Activated CD4-positive, alpha-beta T cell treated with anti-CD3 and anti-CD28 coated beads, Interleukin-2, amount 10 ng/mL, durations not matched to agents 24 days and 14 days (primary cell): ENCODE measurements at regions of chr18 and their contacts with region 1.

Region 1: DNA sequence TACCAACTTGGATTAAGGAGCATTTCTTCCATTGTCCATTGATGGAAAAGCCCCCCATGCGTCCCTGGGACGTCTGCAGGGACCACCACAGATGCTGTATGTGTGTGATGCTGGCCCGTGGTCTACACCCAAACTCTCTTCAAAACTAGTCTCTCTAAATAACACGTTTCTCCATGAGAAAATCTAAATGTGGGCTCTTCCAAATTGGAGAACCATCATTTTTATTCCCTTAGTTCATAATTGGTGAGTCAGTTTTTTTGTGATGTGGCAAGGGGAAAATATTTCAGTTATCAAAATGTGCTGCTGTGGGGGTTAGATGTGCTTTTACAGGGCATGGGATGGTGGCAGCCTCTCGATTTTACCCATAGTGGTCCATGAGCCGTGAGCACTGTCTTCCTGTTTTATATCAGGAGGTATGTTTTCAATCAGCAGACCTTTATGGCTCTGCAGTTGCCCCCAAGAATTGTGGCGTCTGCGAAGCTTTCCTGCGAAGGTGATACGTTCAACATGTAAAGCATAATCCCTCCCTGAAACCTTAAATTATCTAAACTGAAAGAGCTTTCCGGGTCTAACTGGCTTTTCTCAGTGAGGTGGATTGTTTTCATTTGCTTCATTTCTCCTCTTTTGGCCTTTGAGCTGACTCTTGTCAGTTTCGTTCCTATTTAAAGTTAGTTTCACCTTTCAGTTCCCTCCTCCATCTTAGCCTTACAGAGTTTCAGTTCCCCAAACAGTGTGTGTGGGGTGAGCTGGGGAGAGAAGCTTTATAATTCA is 78.4 kb downstream of the SETBP1 start:
- DNase-seq: peak; percentile 78
- H3K4me3 Mint-ChIP-seq: peak overlapping the region; percentile 77
- H3K27ac Mint-ChIP-seq: peak overlapping the region; percentile 97
- H3K4me1 Mint-ChIP-seq: peaks cover 32% of the 10 kb centered on the region
- H3K27me3 Mint-ChIP-seq: peaks cover 11% of the 10 kb centered on the region

Region 2: DNA sequence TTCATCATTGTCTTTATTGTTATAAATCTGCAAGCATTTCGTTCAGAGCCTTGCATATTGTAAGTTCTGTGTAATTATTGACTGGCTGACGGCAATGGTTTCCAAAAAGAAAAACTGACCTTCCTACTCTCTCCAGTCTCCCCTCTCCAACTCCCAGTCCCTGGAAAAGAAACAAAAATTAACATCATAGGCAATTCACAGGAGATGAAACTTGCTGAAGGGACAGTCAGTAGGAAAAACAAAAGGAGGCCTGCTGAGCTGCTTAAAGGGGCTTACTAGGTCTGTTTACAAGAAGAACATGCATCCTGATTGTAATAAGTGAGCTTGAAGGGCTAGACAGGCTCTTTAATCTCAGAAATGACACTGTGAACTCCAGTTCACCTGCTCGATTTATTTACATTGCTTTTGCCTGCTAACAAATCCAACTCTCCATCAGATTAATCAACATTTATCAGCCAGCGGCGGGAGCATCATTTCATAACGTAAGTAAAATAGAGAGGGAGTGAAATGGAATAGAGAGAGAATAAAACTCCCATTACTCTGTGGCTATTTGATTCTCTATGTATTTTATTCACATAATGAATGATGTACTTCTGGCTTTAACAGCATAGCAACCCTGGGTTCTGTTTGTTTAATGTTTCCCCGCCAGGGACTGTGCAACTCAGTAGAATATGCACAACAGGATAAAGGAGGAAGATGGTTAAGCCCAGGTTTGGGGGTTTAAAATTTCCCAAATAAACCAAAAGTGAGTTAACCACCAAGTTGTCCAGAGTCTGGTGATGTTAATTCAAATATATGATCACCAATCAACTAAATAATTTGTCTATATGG is 335.0 kb before region 1 on chr18:
- intact Hi-C with region 1: no loop called
- DNase-seq: no peak
- H3K4me3 Mint-ChIP-seq: no peak overlapping the region
- H3K27ac Mint-ChIP-seq: no peak overlapping the region
- H3K4me1 Mint-ChIP-seq: no peaks in the 10 kb centered on the region
- H3K27me3 Mint-ChIP-seq: no peaks in the 10 kb centered on the region

Region 3: GRCh38 chr18:44637210-44638051 is 121.6 kb before region 1 on chr18:
- intact Hi-C with region 1: no loop called
- DNase-seq: peak; percentile 58
- H3K4me3 Mint-ChIP-seq: no peak overlapping the region
- H3K27ac Mint-ChIP-seq: no peak overlapping the region
- H3K4me1 Mint-ChIP-seq: peaks cover 3% of the 10 kb centered on the region
- H3K27me3 Mint-ChIP-seq: peaks cover 10% of the 10 kb centered on the region

Region 4: GRCh38 chr18:44651453-44651852 is 107.6 kb before region 1 on chr18:
- intact Hi-C with region 1: no loop called
- DNase-seq: no peak
- H3K4me3 Mint-ChIP-seq: no peak overlapping the region
- H3K27ac Mint-ChIP-seq: no peak overlapping the region
- H3K4me1 Mint-ChIP-seq: no peaks in the 10 kb centered on the region
- H3K27me3 Mint-ChIP-seq: peaks cover 11% of the 10 kb centered on the region

Region 5: GRCh38 chr18:44725300-44726096 is 33.5 kb before region 1 on chr18:
- intact Hi-C with region 1: loop called (anchors 1 kb)
- DNase-seq: peak; percentile 91
- H3K4me3 Mint-ChIP-seq: peak overlapping the region; percentile 72
- H3K27ac Mint-ChIP-seq: peak overlapping the region; percentile 93
- H3K4me1 Mint-ChIP-seq: peaks cover 80% of the 10 kb centered on the region
- H3K27me3 Mint-ChIP-seq: peaks cover 2% of the 10 kb centered on the region

Region 6: DNA sequence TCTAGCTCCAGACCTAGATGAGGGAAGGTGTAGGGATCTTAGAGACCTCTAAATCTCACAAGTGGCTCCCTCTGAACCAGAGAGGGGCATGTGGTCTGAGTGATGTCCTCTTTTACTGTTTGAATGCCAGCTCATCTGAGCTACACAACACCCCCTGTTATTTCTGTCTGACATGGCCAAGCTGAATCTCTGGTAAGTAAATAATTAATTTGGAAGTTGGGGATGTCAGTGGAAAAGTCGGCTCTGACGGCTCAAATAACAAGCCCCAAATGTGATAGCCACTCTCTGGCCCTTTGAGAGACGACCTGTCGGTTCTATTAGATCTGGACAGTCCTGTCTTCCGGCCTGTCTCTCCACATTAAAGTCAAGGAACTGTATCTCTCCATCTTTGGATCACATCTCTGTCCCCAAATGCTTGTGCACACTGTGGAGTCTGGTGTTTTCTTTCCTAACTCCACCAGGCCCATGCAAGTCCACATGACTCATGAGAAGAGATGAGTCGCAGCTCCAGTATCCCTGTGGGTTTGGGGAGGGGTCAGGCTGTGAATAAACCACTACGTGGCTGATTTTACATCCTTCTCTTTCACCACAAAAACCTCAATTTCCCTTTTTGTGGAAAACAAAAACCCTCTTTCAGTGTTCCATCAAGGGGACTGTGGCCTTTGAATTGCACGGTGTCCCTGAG is 25.8 kb before region 1 on chr18:
- intact Hi-C with region 1: loop called (anchors 2 kb)
- DNase-seq: peak; percentile 73
- H3K4me3 Mint-ChIP-seq: peak overlapping the region; percentile 35
- H3K27ac Mint-ChIP-seq: peak overlapping the region; percentile 80
- H3K4me1 Mint-ChIP-seq: peaks cover 55% of the 10 kb centered on the region
- H3K27me3 Mint-ChIP-seq: peaks cover 20% of the 10 kb centered on the region

Region 7: GRCh38 chr18:44799907-44800421 is 40.9 kb after region 1 on chr18:
- intact Hi-C with region 1: loop called (anchors 1 kb)
- DNase-seq: peak; percentile 56
- H3K4me3 Mint-ChIP-seq: peak overlapping the region; percentile 58
- H3K27ac Mint-ChIP-seq: peak overlapping the region; percentile 18
- H3K4me1 Mint-ChIP-seq: peaks cover 59% of the 10 kb centered on the region
- H3K27me3 Mint-ChIP-seq: no peaks in the 10 kb centered on the region

Region 8: GRCh38 chr18:44819944-44820510 is 61.0 kb after region 1 on chr18:
- intact Hi-C with region 1: loop called (anchors 1 kb)
- DNase-seq: no peak
- H3K4me3 Mint-ChIP-seq: no peak overlapping the region
- H3K27ac Mint-ChIP-seq: no peak overlapping the region
- H3K4me1 Mint-ChIP-seq: peaks cover 18% of the 10 kb centered on the region
- H3K27me3 Mint-ChIP-seq: peaks cover 31% of the 10 kb centered on the region

Region 9: DNA sequence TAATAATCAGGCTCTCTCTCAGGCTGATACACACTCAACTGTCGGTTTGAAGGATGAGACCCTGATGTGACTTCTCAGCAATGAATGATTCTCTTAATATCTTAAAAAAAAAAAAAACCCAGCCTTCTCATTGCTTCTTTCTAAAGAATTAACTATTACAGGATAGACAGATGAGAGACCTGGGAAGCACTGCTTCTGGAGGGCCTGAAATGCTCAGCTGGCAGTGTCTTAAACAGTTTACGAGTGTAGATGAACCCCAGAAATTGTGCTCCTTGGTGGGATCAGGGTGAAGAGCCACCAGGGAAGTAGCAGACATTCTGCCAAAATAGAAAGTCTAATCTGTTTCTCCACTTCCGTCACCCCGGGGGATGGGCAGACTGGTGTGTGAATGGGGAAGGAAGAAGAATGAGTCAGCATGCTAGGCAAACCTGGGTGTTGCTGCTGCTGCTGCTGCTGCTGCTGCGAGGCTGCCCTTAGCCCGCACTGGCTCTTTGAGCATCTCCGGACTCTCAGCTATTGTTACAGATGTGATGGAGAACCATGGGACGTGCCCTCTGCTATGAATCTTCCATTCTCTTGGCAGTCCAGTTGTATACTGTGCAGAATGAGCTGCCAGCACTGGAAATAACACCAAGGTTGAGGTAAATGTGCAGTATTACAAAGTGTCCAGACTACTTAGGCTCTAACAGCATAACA is 80.1 kb after region 1 on chr18:
- intact Hi-C with region 1: loop called (anchors 5 kb)
- DNase-seq: peak; percentile 92
- H3K4me3 Mint-ChIP-seq: peak overlapping the region; percentile 22
- H3K27ac Mint-ChIP-seq: peak overlapping the region; percentile 9
- H3K4me1 Mint-ChIP-seq: peaks cover 32% of the 10 kb centered on the region
- H3K27me3 Mint-ChIP-seq: no peaks in the 10 kb centered on the region

Region 10: GRCh38 chr18:44895176-44895798 is 136.2 kb after region 1 on chr18:
- intact Hi-C with region 1: loop called (anchors 1 kb)
- DNase-seq: peak; percentile 73
- H3K4me3 Mint-ChIP-seq: no peak overlapping the region
- H3K27ac Mint-ChIP-seq: peak overlapping the region; percentile 53
- H3K4me1 Mint-ChIP-seq: peaks cover 41% of the 10 kb centered on the region
- H3K27me3 Mint-ChIP-seq: peaks cover 6% of the 10 kb centered on the region